GM12878 (cell line): ENCODE measurements at regions of chr18 and their contacts with region 1.

Region 1: DNA sequence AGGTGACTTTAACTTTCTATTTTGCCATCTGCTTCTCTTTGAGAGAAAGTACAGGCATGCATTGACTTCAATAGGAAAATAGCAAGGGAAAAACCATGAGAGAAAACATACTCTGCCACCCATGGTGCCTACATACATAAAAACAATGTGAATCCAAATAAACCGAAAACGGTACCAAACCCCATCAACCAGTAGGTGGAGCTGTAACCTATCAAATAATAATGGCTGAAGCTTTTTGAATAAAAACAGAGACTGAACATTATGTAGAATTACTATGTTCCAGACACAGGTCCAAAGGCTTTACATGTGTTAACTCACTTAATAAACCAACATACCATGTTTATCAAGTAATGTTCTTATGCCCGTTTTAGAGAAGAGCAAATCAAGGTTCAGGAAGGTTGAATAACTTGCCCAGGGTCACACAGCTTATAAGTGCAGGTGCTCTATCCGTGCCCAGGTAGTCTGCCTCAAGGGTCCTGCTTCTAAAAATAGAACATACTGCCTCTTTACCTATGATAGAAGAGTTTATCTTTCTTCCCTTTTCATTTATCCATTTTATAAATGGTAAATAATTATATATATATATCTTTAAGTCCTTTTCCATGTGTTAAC is 293.9 kb upstream of the SYT4 start:
- DNase-seq: no peak
- ATAC-seq: peak; percentile 74
- H3K4me3 ChIP-seq: no peak overlapping the region
- H3K27ac ChIP-seq: no peak overlapping the region
- H3K4me1 ChIP-seq: no peaks in the 10 kb centered on the region
- H3K27me3 ChIP-seq: no peaks in the 10 kb centered on the region
- CTCF ChIP-seq: peak; percentile 61 to 70 (median 64)
- EP300 ChIP-seq: no peak
- POLR2A ChIP-seq: no peak
- RAD21 ChIP-seq: peak; percentile 78

Region 2: GRCh38 chr18:42290318-42291307 is 1280.6 kb before region 1 on chr18:
- CTCF ChIA-PET with region 1: no interaction called
- POLR2A ChIA-PET with region 1: no interaction called
- RAD21 ChIA-PET with region 1: no interaction called
- SMC1A ChIA-PET with region 1: no interaction called
- in situ Hi-C with region 1: no loop called
- intact Hi-C with region 1: no loop called
- DNase-seq: no peak
- ATAC-seq: no peak
- H3K4me3 ChIP-seq: no peak overlapping the region
- H3K27ac ChIP-seq: no peak overlapping the region
- H3K4me1 ChIP-seq: no peaks in the 10 kb centered on the region
- H3K27me3 ChIP-seq: no peaks in the 10 kb centered on the region
- CTCF ChIP-seq: no peak
- EP300 ChIP-seq: no peak
- POLR2A ChIP-seq: no peak
- RAD21 ChIP-seq: no peak

Region 3: DNA sequence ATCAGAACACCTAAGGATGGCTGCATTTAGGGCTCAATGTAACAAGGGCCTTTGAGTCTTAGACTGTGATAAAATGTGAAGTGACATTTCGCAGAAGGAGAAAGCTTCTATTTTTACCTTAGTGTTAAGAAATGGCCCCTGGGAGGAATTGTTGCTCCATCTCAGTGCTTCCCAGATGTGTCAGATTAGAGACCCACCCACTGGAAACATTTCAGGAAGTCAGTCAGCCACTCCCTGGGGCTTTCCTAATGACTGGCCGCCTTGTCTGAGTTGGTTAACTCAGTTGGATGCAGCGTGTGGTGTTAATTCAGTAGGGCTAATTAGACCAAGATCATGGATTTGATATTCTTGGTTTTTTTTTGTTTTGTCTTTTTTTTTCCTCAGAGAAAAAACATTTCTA is 1260.2 kb before region 1 on chr18:
- CTCF ChIA-PET with region 1: no interaction called
- POLR2A ChIA-PET with region 1: no interaction called
- RAD21 ChIA-PET with region 1: no interaction called
- SMC1A ChIA-PET with region 1: no interaction called
- in situ Hi-C with region 1: no loop called
- intact Hi-C with region 1: loop called (anchors 10 kb)
- DNase-seq: no peak
- ATAC-seq: no peak
- H3K4me3 ChIP-seq: no peak overlapping the region
- H3K27ac ChIP-seq: no peak overlapping the region
- H3K4me1 ChIP-seq: no peaks in the 10 kb centered on the region
- H3K27me3 ChIP-seq: no peaks in the 10 kb centered on the region; a peak in 1 of 4 replicates
- CTCF ChIP-seq: no peak
- EP300 ChIP-seq: no peak
- POLR2A ChIP-seq: no peak
- RAD21 ChIP-seq: no peak

Region 4: DNA sequence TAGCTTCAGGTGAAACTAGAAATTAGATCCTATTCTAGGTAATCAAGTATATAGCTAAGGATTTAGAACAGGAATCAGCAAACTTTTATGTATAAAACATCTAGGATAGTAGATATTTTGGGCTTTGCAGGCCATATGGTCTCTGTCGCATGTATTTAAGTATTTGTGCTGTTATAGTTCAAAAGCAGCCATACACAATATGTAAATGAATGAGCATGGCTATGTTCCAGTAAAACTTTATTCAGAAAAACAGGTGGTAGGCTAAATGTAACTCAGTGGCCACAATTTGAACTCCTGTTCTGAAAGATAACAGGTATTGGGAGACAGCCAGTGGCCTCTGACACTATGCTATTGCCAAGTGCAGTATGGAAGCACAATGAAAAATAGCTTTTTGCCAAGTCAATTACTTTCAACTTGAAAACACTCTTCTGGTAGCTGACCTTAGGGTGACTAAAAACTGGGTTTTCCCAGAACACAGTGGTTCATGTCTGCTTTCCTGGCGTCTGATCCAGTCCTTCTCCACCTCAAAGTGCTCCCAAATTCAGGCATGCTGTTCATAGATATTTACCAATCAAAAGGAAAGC is 10.8 kb after region 1 on chr18:
- CTCF ChIA-PET with region 1: interaction called, 207 read pairs
- POLR2A ChIA-PET with region 1: no interaction called
- RAD21 ChIA-PET with region 1: interaction called, 5 read pairs
- SMC1A ChIA-PET with region 1: interaction called, 23 read pairs
- in situ Hi-C with region 1: no loop called
- intact Hi-C with region 1: loop called (anchors 1 kb)
- DNase-seq: no peak
- ATAC-seq: no peak
- H3K4me3 ChIP-seq: no peak overlapping the region
- H3K27ac ChIP-seq: no peak overlapping the region
- H3K4me1 ChIP-seq: no peaks in the 10 kb centered on the region
- H3K27me3 ChIP-seq: no peaks in the 10 kb centered on the region
- CTCF ChIP-seq: no peak
- EP300 ChIP-seq: no peak
- POLR2A ChIP-seq: no peak
- RAD21 ChIP-seq: no peak

Region 5: DNA sequence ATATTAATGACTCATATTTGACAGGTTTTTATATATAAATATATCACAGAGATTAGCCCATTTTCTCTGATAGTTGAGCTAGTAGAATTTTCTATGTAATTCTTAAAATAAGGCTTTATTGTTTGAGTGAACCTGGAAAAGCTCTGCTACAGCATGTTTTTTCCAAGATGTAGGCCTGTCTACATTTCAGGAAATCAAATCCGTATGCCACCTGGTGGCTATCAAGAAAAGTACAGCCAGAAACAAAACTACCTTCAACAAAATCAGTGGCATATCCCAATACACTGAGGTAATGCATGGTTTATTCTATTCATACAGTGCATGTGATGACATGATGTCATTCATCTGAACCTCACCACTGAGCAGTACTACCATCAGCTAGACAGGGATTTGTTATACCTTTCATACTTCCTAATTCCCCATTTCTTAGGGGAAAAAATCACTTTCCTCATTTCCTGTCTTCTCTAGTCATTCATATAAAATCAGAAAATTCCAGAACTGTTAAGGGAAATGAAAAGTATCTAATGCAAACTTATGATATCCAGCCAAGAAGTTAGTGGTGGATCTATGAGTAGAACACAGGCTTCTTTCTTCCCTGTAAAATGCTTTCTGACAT is 16.5 kb after region 1 on chr18:
- CTCF ChIA-PET with region 1: interaction called, 207 read pairs
- POLR2A ChIA-PET with region 1: no interaction called
- RAD21 ChIA-PET with region 1: interaction called, 7 read pairs
- SMC1A ChIA-PET with region 1: interaction called, 23 read pairs
- in situ Hi-C with region 1: no loop called
- intact Hi-C with region 1: loop called (anchors 1 kb)
- DNase-seq: no peak
- ATAC-seq: peak; percentile 67
- H3K4me3 ChIP-seq: no peak overlapping the region
- H3K27ac ChIP-seq: no peak overlapping the region
- H3K4me1 ChIP-seq: no peaks in the 10 kb centered on the region
- H3K27me3 ChIP-seq: no peaks in the 10 kb centered on the region
- CTCF ChIP-seq: peak; percentile 51 to 65 (median 59)
- EP300 ChIP-seq: no peak
- POLR2A ChIP-seq: no peak
- RAD21 ChIP-seq: peak; percentile 53

Region 6: GRCh38 chr18:43596105-43596712 is 25.0 kb after region 1 on chr18:
- CTCF ChIA-PET with region 1: interaction called, 207 read pairs
- POLR2A ChIA-PET with region 1: no interaction called
- RAD21 ChIA-PET with region 1: interaction called, 5 read pairs
- SMC1A ChIA-PET with region 1: interaction called, 9 read pairs
- in situ Hi-C with region 1: no loop called
- intact Hi-C with region 1: no loop called
- DNase-seq: no peak
- ATAC-seq: peak; percentile 86
- H3K4me3 ChIP-seq: no peak overlapping the region
- H3K27ac ChIP-seq: no peak overlapping the region
- H3K4me1 ChIP-seq: no peaks in the 10 kb centered on the region
- H3K27me3 ChIP-seq: no peaks in the 10 kb centered on the region
- CTCF ChIP-seq: peak; percentile 33 to 53 (median 43); a peak in 5 of 6 replicates
- EP300 ChIP-seq: no peak
- POLR2A ChIP-seq: no peak
- RAD21 ChIP-seq: peak; percentile 59